ENCODE measurements at regions of chr2 and their contacts with region 1.

Region 1: DNA sequence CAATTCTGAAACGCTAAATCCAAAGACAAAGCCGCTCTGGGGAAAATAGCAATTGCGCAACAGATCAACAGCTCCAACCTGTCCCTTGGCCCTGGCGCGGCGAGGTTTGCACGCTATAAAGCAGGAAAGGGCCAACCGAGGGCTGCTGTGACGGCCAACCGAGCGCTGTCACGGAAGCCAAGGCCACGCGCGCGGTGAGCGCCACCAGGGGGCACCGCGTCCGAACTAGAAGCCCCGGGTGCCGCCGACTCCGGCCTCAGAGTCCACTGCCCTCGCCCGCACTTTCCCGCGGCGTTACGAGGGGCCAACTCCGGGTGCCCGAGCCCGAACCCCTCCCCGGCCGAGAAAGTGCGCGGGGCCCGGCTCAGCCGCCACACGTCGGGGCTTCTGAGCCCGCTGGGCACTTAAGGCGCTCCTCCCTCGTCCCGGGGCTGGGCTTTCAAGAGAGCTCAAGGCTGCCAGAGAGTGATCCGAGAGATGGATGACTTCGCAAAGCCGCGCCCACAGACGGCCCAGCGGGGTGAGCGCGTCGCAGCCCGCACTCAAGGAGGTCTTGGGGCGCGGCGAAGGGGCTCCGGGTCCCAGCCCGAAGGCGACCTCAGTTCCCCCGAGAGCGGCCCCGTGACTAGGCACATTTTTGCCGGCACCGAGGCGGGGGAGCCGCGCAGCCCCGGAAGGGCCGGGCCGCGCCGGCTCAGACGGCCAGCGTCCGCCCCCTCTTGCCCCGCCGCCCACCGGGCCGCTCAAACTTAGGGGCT is 897 bp downstream of the NFE2L2 start:
- DNase-seq: peak; percentile 99 to 100
- ATAC-seq: peak; percentile 94
- H3K4me3 ChIP-seq: peak overlapping the region; percentile 90 to 94
- H3K27ac ChIP-seq: peak overlapping the region; percentile 98 to 99
- H3K4me1 ChIP-seq: no peaks in the 10 kb centered on the region
- H3K27me3 ChIP-seq: no peaks in the 10 kb centered on the region

Region 2: DNA sequence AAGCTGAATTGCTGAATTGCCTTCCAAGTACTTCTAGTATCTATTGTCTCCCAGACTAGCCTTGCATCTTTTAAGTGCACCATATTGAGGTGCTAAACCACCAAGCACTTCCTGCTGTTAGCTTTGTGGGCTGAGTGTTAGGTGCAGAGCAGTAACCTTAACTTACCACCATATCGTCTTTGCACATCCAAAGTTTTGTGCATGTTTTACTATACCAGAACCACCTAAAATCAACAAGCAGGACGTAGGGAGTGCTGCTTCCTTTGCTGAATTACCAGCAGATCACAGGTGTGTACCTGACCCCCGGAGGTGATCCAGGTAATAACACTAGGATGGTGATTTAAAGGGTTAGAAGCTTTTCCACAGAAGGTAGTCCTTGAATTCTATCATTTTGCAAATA is 411.0 kb before region 1 on chr2:
- intact Hi-C with region 1: no loop called
- DNase-seq: no peak
- ATAC-seq: no peak
- H3K4me3 ChIP-seq: no peak overlapping the region
- H3K27ac ChIP-seq: no peak overlapping the region
- H3K4me1 ChIP-seq: no peaks in the 10 kb centered on the region
- H3K27me3 ChIP-seq: no peaks in the 10 kb centered on the region

Region 3: DNA sequence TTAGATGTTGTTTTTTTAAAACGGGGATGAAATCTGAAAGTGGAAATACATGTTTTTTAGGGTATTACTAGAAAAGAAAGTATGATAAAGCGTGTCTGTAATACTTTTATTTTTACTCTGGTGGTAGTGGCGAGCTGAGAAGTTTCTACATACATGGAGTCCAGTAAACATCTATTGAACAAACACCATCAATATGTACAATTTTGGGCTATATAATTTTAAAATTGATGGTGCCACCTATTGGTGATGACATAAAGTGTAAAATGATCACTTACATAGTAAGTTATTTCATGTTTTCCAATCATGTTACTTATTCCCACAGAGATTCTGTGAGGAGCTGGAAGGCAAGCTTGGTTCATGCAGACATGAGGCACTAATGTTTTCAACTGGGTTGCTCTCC is 32.4 kb after region 1 on chr2:
- intact Hi-C with region 1: loop called in 1 of 2 experiments (anchors 1 kb)
- DNase-seq: no peak
- ATAC-seq: peak; percentile 56
- H3K4me3 ChIP-seq: peak overlapping the region in 1 of 2 donors; percentile 69
- H3K27ac ChIP-seq: no peak overlapping the region
- H3K4me1 ChIP-seq: no peaks in the 10 kb centered on the region
- H3K27me3 ChIP-seq: no peaks in the 10 kb centered on the region

Region 4: GRCh38 chr2:177314194-177314593 is 50.6 kb after region 1 on chr2:
- intact Hi-C with region 1: no loop called
- DNase-seq: no peak
- ATAC-seq: peak; percentile 88
- H3K4me3 ChIP-seq: no peak overlapping the region
- H3K27ac ChIP-seq: no peak overlapping the region
- H3K4me1 ChIP-seq: peaks cover 2 to 3% of the 10 kb centered on the region in 2 donors
- H3K27me3 ChIP-seq: no peaks in the 10 kb centered on the region

Region 5: GRCh38 chr2:179129574-179130238 is 1866.1 kb after region 1 on chr2:
- intact Hi-C with region 1: no loop called
- DNase-seq: no peak
- ATAC-seq: no peak
- H3K4me3 ChIP-seq: no peak overlapping the region
- H3K27ac ChIP-seq: no peak overlapping the region
- H3K4me1 ChIP-seq: no peaks in the 10 kb centered on the region
- H3K27me3 ChIP-seq: no peaks in the 10 kb centered on the region

Measured in aorta (tissue), 5 donors.